ENCODE measurements at regions of chr2 and their contacts with region 1.

Region 1: DNA sequence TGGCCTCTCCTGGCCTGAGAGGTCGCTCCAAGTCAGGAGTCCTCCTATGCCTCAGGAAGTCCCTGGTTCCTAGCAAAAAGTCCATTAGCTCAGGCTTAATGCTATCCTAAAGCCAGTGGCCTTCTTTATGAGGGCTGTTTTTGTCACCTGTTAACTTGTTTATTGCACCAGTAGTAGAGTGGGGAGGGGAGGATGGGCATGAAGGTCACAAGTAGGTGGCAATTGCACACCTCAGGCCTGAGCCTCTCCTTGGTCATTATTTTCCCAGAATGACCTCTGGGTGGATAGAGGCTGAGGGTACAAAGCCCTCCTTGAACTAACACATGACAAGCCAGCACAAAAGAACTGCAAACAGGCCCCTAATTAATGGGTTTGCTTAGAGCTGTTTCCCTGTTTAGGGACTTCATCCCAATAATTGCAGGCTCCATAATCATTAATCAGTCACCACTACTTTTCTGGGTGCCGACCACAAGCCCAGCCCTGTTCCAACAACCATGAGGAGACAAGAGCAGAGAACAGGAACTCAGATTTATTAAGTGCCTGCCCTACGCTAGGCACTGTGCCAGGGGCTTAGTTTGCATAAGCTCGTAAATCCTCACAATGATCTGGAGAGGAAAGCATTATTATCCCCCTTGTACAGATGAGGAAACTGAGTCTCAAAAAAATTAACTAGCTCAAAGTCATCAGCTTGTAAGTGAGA is 123.0 kb upstream of the PKDCC start:
- DNase-seq: no peak
- H3K4me3 ChIP-seq: no peak overlapping the region
- H3K27ac ChIP-seq: no peak overlapping the region
- H3K4me1 ChIP-seq: no peaks in the 10 kb centered on the region
- H3K27me3 ChIP-seq: no peaks in the 10 kb centered on the region
- CTCF ChIP-seq: no peak
- POLR2A ChIP-seq: no peak

Region 2: DNA sequence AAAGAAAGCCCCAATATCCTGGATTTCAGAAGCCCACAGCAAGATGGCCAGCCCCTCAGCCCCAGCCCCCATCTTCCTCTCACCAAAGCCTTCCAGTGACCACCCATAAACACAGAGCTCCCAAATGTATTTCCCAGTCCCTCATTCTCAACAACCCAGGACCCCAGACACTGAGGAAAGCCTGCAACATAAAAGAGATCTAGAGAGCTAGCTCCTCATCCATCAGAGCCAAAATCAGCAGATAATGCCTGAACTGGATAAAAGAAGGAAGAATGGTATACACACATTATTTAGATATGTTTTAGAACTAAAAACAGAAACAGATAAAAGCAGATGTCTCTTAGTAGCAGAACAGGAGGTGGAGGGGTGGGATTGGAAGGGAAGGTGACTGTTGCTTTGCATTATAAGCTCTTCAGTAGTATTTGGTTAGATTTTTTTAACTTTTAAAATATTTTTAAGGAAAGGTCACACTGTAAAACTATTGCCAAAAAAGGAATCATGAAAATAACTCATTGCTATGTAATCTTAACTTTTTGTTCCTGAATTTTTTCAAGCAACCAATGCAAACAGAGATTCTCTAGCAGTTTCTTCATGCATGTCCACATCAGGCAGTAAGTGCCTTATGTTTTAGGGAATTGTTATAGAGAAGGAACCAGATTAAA is 21.3 kb before region 1 on chr2:
- CTCF ChIA-PET with region 1: no interaction called
- POLR2A ChIA-PET with region 1: no interaction called
- dilution Hi-C with region 1: no loop called
- intact Hi-C with region 1: loop called (anchors 1 kb)
- DNase-seq: no peak
- H3K4me3 ChIP-seq: no peak overlapping the region
- H3K27ac ChIP-seq: no peak overlapping the region
- H3K4me1 ChIP-seq: peaks cover 8% of the 10 kb centered on the region
- H3K27me3 ChIP-seq: peaks cover 4 to 13% of the 10 kb centered on the region in 2 experiments
- CTCF ChIP-seq: no peak
- POLR2A ChIP-seq: no peak

Region 3: GRCh38 chr2:41955316-41956043 is 30.6 kb after region 1 on chr2:
- CTCF ChIA-PET with region 1: no interaction called
- POLR2A ChIA-PET with region 1: no interaction called
- dilution Hi-C with region 1: no loop called
- intact Hi-C with region 1: no loop called
- DNase-seq: no peak
- H3K4me3 ChIP-seq: no peak overlapping the region
- H3K27ac ChIP-seq: no peak overlapping the region
- H3K4me1 ChIP-seq: peaks cover 9% of the 10 kb centered on the region
- H3K27me3 ChIP-seq: peaks cover 7% of the 10 kb centered on the region in 2 experiments
- CTCF ChIP-seq: no peak
- POLR2A ChIP-seq: no peak

Measured in endothelial cell of umbilical vein (primary cell).